ENCODE measurements at regions of chr6 and their contacts with region 1.

Region 1: DNA sequence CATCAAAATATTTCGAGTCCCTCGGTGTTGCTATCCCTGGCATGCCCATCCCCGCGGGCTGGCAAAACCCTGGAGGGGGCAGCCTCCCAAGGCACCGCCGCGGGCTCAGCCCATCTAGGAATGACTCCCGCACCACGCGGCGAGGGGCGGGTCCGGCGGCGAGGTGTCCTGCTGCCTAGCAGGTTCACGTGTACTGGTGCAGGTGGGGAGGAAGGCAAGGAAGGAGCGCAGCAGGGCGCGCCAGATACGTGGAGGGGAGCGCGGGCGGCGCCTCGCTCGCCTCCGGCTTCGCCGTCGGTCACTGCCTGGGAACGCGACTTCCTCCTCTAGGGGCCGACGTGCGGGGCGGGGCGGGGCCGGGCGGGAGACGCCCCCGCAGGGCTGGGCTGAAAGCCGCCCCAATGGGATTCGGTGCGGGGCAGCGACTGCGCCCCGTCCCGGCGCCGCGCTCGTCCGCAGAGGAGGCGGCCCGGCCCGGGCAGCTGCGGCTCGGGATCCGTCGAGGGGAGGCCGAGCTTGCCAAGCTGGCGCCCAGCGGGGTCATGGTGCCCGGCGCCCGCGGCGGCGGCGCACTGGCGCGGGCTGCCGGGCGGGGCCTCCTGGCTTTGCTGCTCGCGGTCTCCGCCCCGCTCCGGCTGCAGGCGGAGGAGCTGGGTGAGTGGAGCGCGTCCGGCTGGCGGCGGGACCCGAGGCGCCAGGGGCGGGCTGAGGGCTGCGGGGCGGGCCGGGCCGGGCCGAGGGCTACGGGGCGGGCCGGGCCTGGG is at the start of gene DCBLD1:
- DNase-seq: peak; percentile 78
- ATAC-seq: peak; percentile 75
- H3K4me3 ChIP-seq: peak within 1 kb of the TSS; percentile 86 to 92 (median 91)
- H3K27ac ChIP-seq: peak within 1 kb of the TSS; percentile 91
- H3K4me1 ChIP-seq: peaks cover 82% of the 10 kb centered on the region
- H3K27me3 ChIP-seq: no peaks in the 10 kb centered on the region; a peak in 1 of 5 replicates
- CTCF ChIP-seq: peak; percentile 38; the same call in 1 of the 2 replicates
- EP300 ChIP-seq: no peak; a peak in 1 of 4 replicates
- POLR2A ChIP-seq: peak; percentile 85 to 88
- RAD21 ChIP-seq: peak; percentile 64
- total RNA-seq, gene DCBLD1: 26.0 and 41.5 TPM in 2 replicates

Region 2: DNA sequence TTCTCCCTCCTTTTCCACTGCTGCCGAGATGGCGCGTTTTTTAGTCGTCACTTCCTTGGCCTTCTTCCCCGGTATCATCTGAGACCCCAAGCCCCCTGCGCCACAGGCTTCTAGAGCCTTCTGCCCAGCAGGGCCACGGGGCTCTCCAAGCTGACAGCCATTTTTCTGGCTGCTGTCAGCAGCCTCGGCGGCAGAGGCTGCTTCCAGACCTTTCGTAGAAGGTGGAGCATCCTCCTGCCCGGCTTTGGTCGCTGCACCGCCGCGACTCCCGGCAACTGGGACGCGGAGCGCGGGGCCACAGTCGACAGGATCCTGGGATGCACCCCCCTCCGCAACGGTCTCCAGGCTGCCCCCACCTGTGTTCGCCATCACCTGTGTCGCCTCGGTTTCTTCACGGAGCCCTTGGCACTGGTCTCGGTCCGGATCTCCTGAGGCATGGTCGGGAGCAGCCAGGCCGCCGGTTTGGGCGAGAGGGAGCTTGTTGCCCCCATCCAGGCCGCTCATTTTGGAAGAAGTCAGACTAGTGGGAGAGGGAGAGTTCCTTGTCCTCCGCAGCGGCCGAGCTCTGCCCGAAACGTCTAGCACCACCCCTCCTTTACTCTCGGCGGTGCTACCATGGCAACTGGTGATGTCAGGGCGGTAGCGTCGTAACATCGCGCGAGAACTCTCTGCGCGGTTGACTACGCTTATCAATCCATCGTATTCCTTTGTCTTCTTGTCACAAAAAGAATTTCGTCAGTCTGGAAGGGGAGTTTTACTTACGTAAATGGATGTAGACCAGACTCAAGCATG is 1228.7 kb before region 1 on chr6 and contains the start of gene TSPYL4:
- CTCF ChIA-PET with region 1: no interaction called
- POLR2A ChIA-PET with region 1: no interaction called
- in situ Hi-C with region 1: no loop called
- intact Hi-C with region 1: loop called (anchors 10 kb)
- DNase-seq: peak; percentile 95
- ATAC-seq: peak; percentile 95
- H3K4me3 ChIP-seq: peak within 1 kb of the TSS; percentile 86 to 92 (median 89)
- H3K27ac ChIP-seq: peak within 1 kb of the TSS; percentile 78
- H3K4me1 ChIP-seq: peaks cover 54% of the 10 kb centered on the region
- H3K27me3 ChIP-seq: no peaks in the 10 kb centered on the region
- CTCF ChIP-seq: peak; percentile 3; the same call in 1 of the 2 replicates
- EP300 ChIP-seq: no peak
- POLR2A ChIP-seq: peak; percentile 73 to 83; a peak in 3 of 4 replicates
- RAD21 ChIP-seq: no peak
- total RNA-seq, gene TSPYL4: 19.7 and 24.0 TPM in 2 replicates

Region 3: GRCh38 chr6:117346142-117346930 is 136.1 kb before region 1 on chr6:
- CTCF ChIA-PET with region 1: no interaction called
- POLR2A ChIA-PET with region 1: no interaction called
- in situ Hi-C with region 1: no loop called
- intact Hi-C with region 1: no loop called
- DNase-seq: peak; percentile 23
- ATAC-seq: no peak
- H3K4me3 ChIP-seq: no peak overlapping the region
- H3K27ac ChIP-seq: no peak overlapping the region
- H3K4me1 ChIP-seq: no peaks in the 10 kb centered on the region; the same call in 1 of the 2 replicates
- H3K27me3 ChIP-seq: no peaks in the 10 kb centered on the region
- CTCF ChIP-seq: peak; percentile 36; the same call in 1 of the 2 replicates
- EP300 ChIP-seq: no peak
- POLR2A ChIP-seq: no peak
- RAD21 ChIP-seq: 0 out of 2 replicates have a peak, but pooled peaks have one; percentile 11

Region 4: GRCh38 chr6:117449549-117450439 is 32.6 kb before region 1 on chr6:
- CTCF ChIA-PET with region 1: interaction called, 6 read pairs
- POLR2A ChIA-PET with region 1: interaction called, 5 read pairs
- in situ Hi-C with region 1: no loop called
- intact Hi-C with region 1: loop called (anchors 1 kb)
- DNase-seq: peak; percentile 66
- ATAC-seq: peak; percentile 54; the same call in 2 of the 3 replicates
- H3K4me3 ChIP-seq: no peak overlapping the region
- H3K27ac ChIP-seq: no peak overlapping the region
- H3K4me1 ChIP-seq: peaks cover 33% of the 10 kb centered on the region
- H3K27me3 ChIP-seq: peaks cover 2 to 16% of the 10 kb centered on the region in 2 experiments; a peak in 4 of 5 replicates
- CTCF ChIP-seq: peak; percentile 79
- EP300 ChIP-seq: no peak
- POLR2A ChIP-seq: no peak
- RAD21 ChIP-seq: peak; percentile 75

Region 5: GRCh38 chr6:117469356-117469755 is 13.1 kb before region 1 on chr6:
- CTCF ChIA-PET with region 1: no interaction called
- POLR2A ChIA-PET with region 1: no interaction called
- in situ Hi-C with region 1: no loop called
- intact Hi-C with region 1: no loop called
- DNase-seq: no peak
- ATAC-seq: no peak
- H3K4me3 ChIP-seq: no peak overlapping the region
- H3K27ac ChIP-seq: no peak overlapping the region
- H3K4me1 ChIP-seq: no peaks in the 10 kb centered on the region
- H3K27me3 ChIP-seq: peaks cover 1 to 27% of the 10 kb centered on the region in 2 experiments; a peak in 3 of 5 replicates
- CTCF ChIP-seq: no peak
- EP300 ChIP-seq: no peak
- POLR2A ChIP-seq: no peak
- RAD21 ChIP-seq: no peak

Region 6: DNA sequence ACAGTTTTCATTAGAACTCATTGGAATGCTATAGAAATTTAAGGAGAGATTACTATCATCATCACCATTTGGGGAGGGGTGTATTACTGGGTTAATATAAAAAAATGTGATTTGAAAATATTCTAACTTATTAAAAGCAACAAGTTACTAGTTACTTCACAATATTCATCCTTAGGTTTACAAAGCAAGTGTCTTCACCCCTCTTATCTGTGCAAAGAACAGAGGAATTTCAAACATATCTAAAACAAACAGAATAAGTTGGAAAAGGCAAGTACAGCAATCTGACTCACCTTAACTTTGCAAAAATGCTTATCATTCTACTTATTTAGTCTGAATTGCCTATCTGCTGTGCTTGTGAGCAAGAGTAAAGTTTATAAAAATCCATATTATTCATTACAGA is 32.9 kb after region 1 on chr6:
- CTCF ChIA-PET with region 1: no interaction called
- POLR2A ChIA-PET with region 1: interaction called, 15 read pairs
- in situ Hi-C with region 1: no loop called
- intact Hi-C with region 1: loop called (anchors 2 kb)
- DNase-seq: peak; percentile 82
- ATAC-seq: peak; percentile 82
- H3K4me3 ChIP-seq: no peak overlapping the region
- H3K27ac ChIP-seq: no peak overlapping the region
- H3K4me1 ChIP-seq: peaks cover 66% of the 10 kb centered on the region
- H3K27me3 ChIP-seq: no peaks in the 10 kb centered on the region
- CTCF ChIP-seq: no peak
- EP300 ChIP-seq: peak in 1 of 2 experiments; percentile 67; a peak in 2 of 4 replicates
- POLR2A ChIP-seq: no peak
- RAD21 ChIP-seq: no peak

Region 7: GRCh38 chr6:117555882-117556498 is 73.6 kb after region 1 on chr6:
- CTCF ChIA-PET with region 1: interaction called, 38 read pairs
- POLR2A ChIA-PET with region 1: interaction called, 11 read pairs
- in situ Hi-C with region 1: no loop called
- intact Hi-C with region 1: loop called (anchors 1 kb)
- DNase-seq: peak; percentile 27
- ATAC-seq: peak; percentile 21; the same call in 1 of the 3 replicates
- H3K4me3 ChIP-seq: no peak overlapping the region
- H3K27ac ChIP-seq: no peak overlapping the region
- H3K4me1 ChIP-seq: peaks cover 6% of the 10 kb centered on the region; the same call in 1 of the 2 replicates
- H3K27me3 ChIP-seq: no peaks in the 10 kb centered on the region
- CTCF ChIP-seq: peak; percentile 72
- EP300 ChIP-seq: no peak
- POLR2A ChIP-seq: no peak
- RAD21 ChIP-seq: peak; percentile 56

Measured in HepG2 (cell line).